Endothelial cell of umbilical vein (primary cell): ENCODE measurements at regions of chr14 and their contacts with region 1.

Region 1: DNA sequence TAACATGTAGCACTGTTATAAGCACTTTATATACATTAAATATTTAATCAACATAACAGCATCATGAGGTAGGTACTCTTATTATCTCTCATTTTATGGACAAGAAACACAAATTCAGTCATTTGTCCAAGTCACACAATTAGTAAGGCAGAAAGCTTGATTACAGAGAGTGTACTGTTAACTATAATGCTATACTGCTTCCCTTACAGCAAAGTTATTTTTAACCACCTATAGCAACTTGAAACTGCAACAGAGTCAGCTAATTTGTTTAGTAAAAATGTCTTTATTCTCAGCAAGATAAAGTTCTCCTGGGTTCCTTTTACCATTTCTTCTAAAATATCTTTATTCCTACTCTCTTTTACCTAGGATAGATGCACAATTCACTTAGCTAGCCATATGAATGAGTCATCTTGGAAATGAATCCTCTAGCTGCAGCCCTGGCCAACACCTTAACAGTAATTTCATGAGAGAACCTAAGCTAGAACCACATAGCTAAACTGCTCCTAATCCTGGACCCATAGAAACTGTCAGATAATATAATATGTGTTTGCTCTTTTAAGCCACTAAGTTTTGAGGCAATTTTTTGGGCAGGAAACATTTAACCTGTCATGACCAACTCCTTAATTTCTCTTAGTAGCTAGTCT is 90.2 kb upstream of the HECTD1 start:
- DNase-seq: no peak
- H3K4me3 ChIP-seq: no peak overlapping the region
- H3K27ac ChIP-seq: no peak overlapping the region
- H3K4me1 ChIP-seq: peaks cover 35% of the 10 kb centered on the region
- H3K27me3 ChIP-seq: no peaks in the 10 kb centered on the region
- CTCF ChIP-seq: no peak
- POLR2A ChIP-seq: no peak

Region 2: GRCh38 chr14:30861200-30861599 is 436.6 kb before region 1 on chr14:
- CTCF ChIA-PET with region 1: no interaction called
- POLR2A ChIA-PET with region 1: no interaction called
- dilution Hi-C with region 1: no loop called
- intact Hi-C with region 1: no loop called
- DNase-seq: no peak
- H3K4me3 ChIP-seq: no peak overlapping the region
- H3K27ac ChIP-seq: no peak overlapping the region
- H3K4me1 ChIP-seq: no peaks in the 10 kb centered on the region
- H3K27me3 ChIP-seq: peaks cover 14 to 20% of the 10 kb centered on the region in 2 experiments
- CTCF ChIP-seq: no peak
- POLR2A ChIP-seq: no peak

Region 3: GRCh38 chr14:31263485-31264133 is 34.2 kb before region 1 on chr14:
- CTCF ChIA-PET with region 1: no interaction called
- POLR2A ChIA-PET with region 1: no interaction called
- dilution Hi-C with region 1: no loop called
- intact Hi-C with region 1: loop called (anchors 1 kb)
- DNase-seq: peak; percentile 95
- H3K4me3 ChIP-seq: no peak overlapping the region
- H3K27ac ChIP-seq: peak overlapping the region; percentile 81
- H3K4me1 ChIP-seq: peaks cover 18% of the 10 kb centered on the region
- H3K27me3 ChIP-seq: no peaks in the 10 kb centered on the region
- CTCF ChIP-seq: no peak
- POLR2A ChIP-seq: no peak